BJ (cell line): ENCODE measurements at regions of chr10 and their contacts with region 1.

Region 1: GRCh38 chr10:101141616-101142532 is 10.8 kb downstream of the TLX1 start:
- DNase-seq: peak; percentile 13
- H3K4me3 ChIP-seq: no peak overlapping the region
- H3K27me3 ChIP-seq: peaks cover 69% of the 10 kb centered on the region
- CTCF ChIP-seq: peak; percentile 99

Region 2: GRCh38 chr10:100890673-100891317 is 251.1 kb before region 1 on chr10:
- CTCF ChIA-PET with region 1: no interaction called
- POLR2A ChIA-PET with region 1: no interaction called
- DNase-seq: peak; percentile 94
- H3K4me3 ChIP-seq: no peak overlapping the region
- H3K27me3 ChIP-seq: no peaks in the 10 kb centered on the region
- CTCF ChIP-seq: no peak

Region 3: GRCh38 chr10:100934084-100934659 is 207.7 kb before region 1 on chr10:
- CTCF ChIA-PET with region 1: no interaction called
- POLR2A ChIA-PET with region 1: no interaction called
- DNase-seq: no peak
- H3K4me3 ChIP-seq: no peak overlapping the region
- H3K27me3 ChIP-seq: no peaks in the 10 kb centered on the region
- CTCF ChIP-seq: peak; percentile 57

Region 4: GRCh38 chr10:101012525-101013364 is 129.1 kb before region 1 on chr10:
- CTCF ChIA-PET with region 1: interaction called, 17 read pairs
- POLR2A ChIA-PET with region 1: no interaction called
- DNase-seq: peak; percentile 72
- H3K4me3 ChIP-seq: no peak overlapping the region
- H3K27me3 ChIP-seq: no peaks in the 10 kb centered on the region
- CTCF ChIP-seq: peak; percentile 77

Region 5: GRCh38 chr10:101050208-101051069 is 91.4 kb before region 1 on chr10:
- CTCF ChIA-PET with region 1: interaction called, 70 read pairs
- POLR2A ChIA-PET with region 1: no interaction called
- DNase-seq: no peak
- H3K4me3 ChIP-seq: peak overlapping the region; percentile 18
- H3K27me3 ChIP-seq: peaks cover 12% of the 10 kb centered on the region
- CTCF ChIP-seq: peak; percentile 88

Region 6: DNA sequence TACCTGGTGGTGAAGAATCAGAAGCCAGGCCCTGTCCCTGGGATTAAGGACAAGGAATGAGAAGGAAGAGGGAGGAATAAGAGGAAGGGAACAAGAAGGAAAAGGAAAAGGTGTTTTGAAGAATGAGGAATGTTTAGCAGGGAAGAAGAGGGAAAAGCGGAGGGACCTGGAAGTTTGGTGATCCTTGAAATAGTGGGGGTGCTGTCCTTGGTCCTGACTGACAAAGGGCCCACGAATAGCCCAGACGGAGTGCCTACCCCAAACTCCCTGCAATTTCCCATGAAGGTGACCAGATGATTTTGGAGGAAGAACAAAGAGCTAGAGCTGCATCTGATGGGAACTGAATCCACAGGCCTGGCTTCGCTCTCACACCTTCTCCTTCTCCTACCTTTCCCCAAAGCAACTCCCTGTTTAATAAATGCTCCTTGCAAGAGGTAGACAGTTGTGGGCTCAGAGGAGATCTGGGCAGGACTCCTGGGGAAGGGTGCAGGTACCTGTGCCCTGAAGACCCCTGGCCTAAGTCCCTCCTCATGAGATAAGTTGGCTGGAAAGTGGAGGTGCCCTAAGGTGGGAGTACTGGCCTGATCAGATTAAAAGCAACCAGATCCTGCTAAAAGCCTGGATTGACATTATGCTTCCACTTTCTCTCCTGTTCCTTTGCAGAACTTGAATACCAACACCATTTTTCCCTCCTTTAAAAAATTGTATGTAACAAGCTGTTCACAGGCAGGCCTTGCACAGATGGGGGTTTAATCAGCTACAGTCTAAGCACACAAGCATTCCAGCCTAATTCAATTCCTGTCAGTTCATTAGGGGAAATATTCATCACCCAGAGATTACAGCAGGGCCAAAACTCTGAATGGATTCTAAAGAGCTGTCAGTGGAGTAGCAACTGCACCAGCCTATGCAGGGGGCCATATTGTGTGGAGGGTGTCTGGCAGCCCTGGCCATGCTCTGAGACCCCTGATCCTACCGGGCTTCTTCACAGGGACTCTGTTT is 60.6 kb before region 1 on chr10:
- CTCF ChIA-PET with region 1: interaction called, 13 read pairs
- POLR2A ChIA-PET with region 1: no interaction called
- DNase-seq: no peak
- H3K4me3 ChIP-seq: no peak overlapping the region
- H3K27me3 ChIP-seq: peaks cover 19% of the 10 kb centered on the region
- CTCF ChIP-seq: no peak

Region 7: GRCh38 chr10:101107771-101108170 is 34.1 kb before region 1 on chr10:
- CTCF ChIA-PET with region 1: interaction called, 312 read pairs
- POLR2A ChIA-PET with region 1: interaction called, 3 read pairs
- DNase-seq: no peak
- H3K4me3 ChIP-seq: no peak overlapping the region
- H3K27me3 ChIP-seq: peaks cover 18% of the 10 kb centered on the region
- CTCF ChIP-seq: no peak

Region 8: DNA sequence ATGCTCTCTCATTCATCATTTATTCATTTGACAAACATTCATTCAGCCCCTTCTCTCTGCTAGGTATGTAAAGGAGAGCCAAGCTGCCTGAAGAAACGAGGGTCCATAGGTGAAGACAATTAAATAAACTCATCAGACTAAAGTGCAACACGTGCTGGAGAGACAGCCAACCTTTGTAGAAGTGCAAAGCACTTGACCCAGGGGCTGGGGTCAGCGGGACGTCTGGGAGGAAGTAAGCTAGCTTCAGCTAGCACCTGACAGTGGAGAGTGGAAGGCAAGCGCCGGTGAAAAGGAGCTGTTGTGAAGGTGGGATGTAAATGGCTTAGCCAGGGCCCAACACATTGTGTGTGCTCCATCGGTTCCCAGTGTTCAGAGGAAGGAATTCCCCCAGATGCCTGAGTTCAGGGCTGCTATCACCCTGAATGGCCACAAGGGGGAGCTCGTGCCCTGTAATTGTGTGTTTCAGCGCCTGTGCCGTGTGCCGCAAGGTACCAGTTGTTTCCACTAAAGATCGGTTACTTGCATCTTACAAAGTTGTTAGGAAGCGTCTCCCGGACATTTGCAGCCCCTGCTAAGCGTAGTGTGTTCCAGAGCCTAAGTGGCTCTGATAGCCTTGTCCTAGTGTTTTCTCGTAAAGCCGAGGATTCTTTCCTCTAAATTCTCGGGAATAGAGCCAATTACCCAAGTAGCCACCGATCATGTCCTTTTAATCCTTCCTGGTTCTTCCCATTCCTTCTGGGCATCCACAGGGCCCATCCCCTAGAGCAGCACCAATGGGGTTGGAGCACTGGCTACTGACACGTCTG is 19.8 kb after region 1 on chr10:
- CTCF ChIA-PET with region 1: interaction called, 99 read pairs
- POLR2A ChIA-PET with region 1: no interaction called
- DNase-seq: peak; percentile 14
- H3K4me3 ChIP-seq: peak overlapping the region; percentile 38
- H3K27me3 ChIP-seq: peaks cover 12% of the 10 kb centered on the region; the same call in 1 of the 2 replicates
- CTCF ChIP-seq: peak; percentile 95